A673 (cell line): ENCODE measurements at regions of chr1 and their contacts with region 1.

Region 1: GRCh38 chr1:174736831-174737230 is 262.9 kb upstream of the CACYBP start:
- DNase-seq: no peak
- H3K4me3 ChIP-seq: no peak overlapping the region
- H3K27ac ChIP-seq: no peak overlapping the region
- H3K4me1 ChIP-seq: no peaks in the 10 kb centered on the region
- H3K27me3 ChIP-seq: no peaks in the 10 kb centered on the region
- CTCF ChIP-seq: no peak

Region 2: GRCh38 chr1:174519844-174520243 is 217.0 kb before region 1 on chr1:
- CTCF ChIA-PET with region 1: no interaction called
- POLR2A ChIA-PET with region 1: no interaction called
- intact Hi-C with region 1: loop called (anchors 10 kb)
- DNase-seq: no peak
- H3K4me3 ChIP-seq: no peak overlapping the region
- H3K27ac ChIP-seq: no peak overlapping the region
- H3K4me1 ChIP-seq: no peaks in the 10 kb centered on the region
- H3K27me3 ChIP-seq: no peaks in the 10 kb centered on the region
- CTCF ChIP-seq: no peak

Region 3: DNA sequence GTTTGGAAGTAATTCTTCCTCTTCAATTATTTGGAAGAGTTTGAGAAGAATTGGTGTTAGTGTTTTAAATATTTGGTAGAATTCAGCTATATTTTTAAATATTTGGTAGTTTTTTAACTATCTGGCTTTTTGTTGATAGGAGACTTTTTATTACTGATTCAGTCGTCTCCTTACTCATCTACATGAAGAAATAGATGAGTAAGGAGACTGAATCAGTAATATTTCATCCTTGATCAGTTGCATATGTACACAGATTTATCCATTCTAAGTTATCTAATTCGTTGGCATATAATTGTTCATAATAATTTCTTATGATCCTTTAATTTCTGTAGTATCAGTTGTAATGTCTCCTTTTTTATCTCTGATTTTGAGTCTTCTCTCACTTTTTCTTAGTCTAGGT is 65.0 kb before region 1 on chr1:
- CTCF ChIA-PET with region 1: no interaction called
- POLR2A ChIA-PET with region 1: no interaction called
- intact Hi-C with region 1: no loop called
- DNase-seq: no peak
- H3K4me3 ChIP-seq: no peak overlapping the region
- H3K27ac ChIP-seq: no peak overlapping the region
- H3K4me1 ChIP-seq: no peaks in the 10 kb centered on the region
- H3K27me3 ChIP-seq: no peaks in the 10 kb centered on the region
- CTCF ChIP-seq: no peak